ENCODE measurements at regions of chr1 and their contacts with region 1.

Region 1: DNA sequence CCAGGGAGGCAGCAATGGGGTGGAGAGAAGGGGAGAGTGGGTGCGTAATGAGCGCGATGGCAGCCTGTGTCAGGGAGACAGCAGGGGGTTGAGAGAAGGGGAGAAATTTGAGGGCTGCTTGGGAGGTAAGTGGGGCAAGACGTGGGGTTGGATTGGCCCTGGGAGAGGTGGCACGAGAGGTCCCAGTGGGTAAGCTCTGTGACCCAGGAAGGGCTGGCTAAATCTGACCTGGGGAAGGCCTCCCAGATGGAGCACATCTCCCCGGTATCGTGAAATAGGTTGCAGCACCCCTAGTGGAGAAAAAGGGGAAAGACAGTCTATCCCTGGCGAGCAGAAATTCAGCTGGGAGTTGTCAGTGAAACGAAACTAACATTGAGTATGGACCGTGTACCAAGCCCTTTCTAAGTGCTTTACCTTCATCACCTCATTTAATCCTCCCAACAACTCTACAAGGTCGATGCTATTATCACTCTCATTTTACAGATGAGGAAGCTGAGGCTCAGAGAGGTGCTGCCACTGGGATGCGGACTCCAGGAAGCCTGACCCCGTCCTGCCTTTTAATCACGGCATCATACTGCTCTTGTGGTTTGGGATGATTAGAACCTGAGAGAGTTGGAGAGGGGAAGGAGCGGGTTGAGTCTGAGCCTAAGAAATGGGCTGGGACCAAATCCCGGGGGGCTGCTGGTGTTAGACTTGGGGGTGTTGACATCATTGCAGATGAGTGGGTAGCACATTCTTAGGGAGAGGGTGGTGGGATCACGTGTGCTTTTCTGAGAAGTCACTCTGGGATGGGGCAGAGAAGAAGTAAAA is 56.6 kb upstream of the RPL11 start:
- DNase-seq: peak; percentile 62
- H3K4me3 ChIP-seq: peak overlapping the region; percentile 5 to 19 (median 13)
- H3K27ac ChIP-seq: no peak overlapping the region
- H3K4me1 ChIP-seq: no peaks in the 10 kb centered on the region
- H3K27me3 ChIP-seq: no peaks in the 10 kb centered on the region
- CTCF ChIP-seq: peak; percentile 87 to 95

Region 2: DNA sequence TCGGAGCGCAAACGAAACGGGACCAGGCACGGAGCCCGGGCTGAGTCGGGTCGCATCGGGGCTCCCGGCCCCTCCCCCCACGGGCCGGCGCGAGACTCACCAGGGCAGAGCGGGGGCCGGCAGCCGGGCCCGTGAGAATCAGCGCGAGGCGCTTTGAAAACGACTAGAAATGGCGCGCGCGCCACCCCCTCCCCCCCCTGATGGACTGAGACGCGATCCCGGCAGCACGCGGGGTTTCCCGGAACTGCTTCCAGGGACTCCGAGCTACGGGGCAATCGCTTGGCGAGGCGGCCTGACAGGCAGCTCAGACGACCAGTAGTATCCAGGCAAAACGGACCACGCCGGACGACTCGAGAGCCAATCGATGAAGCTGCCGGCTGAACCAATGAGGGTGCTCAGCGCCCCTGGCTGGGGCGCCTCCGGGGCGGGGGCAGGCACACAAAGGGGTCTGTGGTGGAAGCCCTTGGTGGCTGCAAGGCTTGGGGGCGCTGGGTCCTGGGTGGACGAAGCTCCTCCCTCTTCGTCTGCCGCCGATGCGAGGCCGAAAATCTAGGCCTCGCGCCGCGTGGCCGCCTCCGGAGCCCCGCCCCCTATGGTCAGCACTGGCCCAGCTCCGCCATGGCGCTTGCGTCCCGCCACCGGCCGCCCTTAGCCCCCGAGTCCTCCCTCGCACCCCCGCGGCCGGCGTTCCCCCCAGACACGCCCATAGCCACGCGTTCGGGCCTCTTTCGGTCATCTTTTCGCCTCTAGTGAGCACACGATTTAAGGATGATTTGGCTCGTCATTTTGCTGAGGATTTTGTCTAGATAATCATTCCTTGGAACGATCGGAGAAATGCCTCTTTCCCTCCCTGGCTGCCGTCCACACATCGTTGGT is 290.7 kb before region 1 on chr1 and contains the start of gene HNRNPR:
- CTCF ChIA-PET with region 1: no interaction called
- dilution Hi-C with region 1: no loop called
- in situ Hi-C with region 1: no loop called
- intact Hi-C with region 1: loop called (anchors 10 kb)
- DNase-seq: peak; percentile 100
- H3K4me3 ChIP-seq: peak within 1 kb of the TSS; percentile 78 to 89 (median 83)
- H3K27ac ChIP-seq: peak within 1 kb of the TSS; percentile 88
- H3K4me1 ChIP-seq: peaks cover 15% of the 10 kb centered on the region
- H3K27me3 ChIP-seq: no peaks in the 10 kb centered on the region
- CTCF ChIP-seq: peak in 1 of 2 donors; percentile 13
- total RNA-seq, gene HNRNPR: 35.2 to 133 TPM

Region 3: GRCh38 chr1:23496490-23497181 is 138.4 kb before region 1 on chr1:
- CTCF ChIA-PET with region 1: interaction called, 11 read pairs
- dilution Hi-C with region 1: no loop called
- in situ Hi-C with region 1: no loop called
- intact Hi-C with region 1: loop called (anchors 1 kb)
- DNase-seq: no peak
- H3K4me3 ChIP-seq: no peak overlapping the region
- H3K27ac ChIP-seq: no peak overlapping the region
- H3K4me1 ChIP-seq: no peaks in the 10 kb centered on the region
- H3K27me3 ChIP-seq: no peaks in the 10 kb centered on the region
- CTCF ChIP-seq: no peak

Region 4: GRCh38 chr1:23577056-23578004 is 57.7 kb before region 1 on chr1:
- CTCF ChIA-PET with region 1: interaction called, 12 read pairs
- dilution Hi-C with region 1: no loop called
- in situ Hi-C with region 1: no loop called
- intact Hi-C with region 1: no loop called
- DNase-seq: peak; percentile 69
- H3K4me3 ChIP-seq: no peak overlapping the region
- H3K27ac ChIP-seq: peak overlapping the region; percentile 60
- H3K4me1 ChIP-seq: peaks cover 18% of the 10 kb centered on the region
- H3K27me3 ChIP-seq: no peaks in the 10 kb centered on the region
- CTCF ChIP-seq: no peak

Region 5: DNA sequence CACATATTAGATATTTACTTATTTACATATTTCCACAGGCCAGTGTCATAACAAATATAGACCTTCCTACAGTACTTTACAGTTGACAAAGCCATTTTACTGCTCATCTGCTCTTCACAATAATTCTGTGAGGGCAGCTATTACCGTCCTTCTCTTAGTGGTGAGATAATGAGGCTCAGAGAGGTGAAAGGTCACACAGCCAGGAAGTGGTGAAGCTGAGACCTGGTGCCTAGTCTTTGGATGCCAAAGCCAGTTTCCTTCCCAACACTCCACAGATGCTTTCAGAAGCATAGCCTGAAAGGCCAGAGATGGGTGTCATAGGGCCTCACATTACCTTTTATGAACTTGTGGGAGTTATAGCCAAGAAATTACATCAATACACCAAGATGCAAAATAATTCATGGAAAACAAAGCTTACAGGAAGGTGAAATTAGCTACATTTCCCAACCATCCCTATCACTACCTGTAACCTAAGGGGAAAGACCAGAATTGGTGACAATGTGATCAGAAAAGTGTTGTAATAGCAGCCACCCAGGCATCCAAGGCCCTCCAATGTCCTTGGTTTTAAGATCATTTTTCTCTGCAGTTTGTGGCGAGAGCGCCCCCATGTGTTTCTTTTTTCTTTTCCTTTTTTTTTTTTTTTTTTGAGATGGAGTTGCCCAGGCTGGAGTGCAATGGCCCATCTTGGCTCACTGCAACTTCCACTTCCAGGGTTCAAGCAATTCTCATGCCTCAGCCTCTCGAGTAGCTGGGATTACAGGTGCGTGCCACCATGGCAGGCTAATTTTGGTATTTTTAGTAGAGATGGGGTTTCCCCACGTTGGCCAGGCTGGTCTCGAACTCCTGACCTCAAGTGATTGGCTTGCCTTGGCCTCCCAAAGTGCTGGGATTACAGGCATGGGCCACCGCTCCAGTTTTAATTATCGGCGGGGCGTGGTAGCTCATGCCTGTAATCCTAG is 30.1 kb after region 1 on chr1:
- CTCF ChIA-PET with region 1: no interaction called
- dilution Hi-C with region 1: no loop called
- in situ Hi-C with region 1: no loop called
- intact Hi-C with region 1: loop called (anchors 1 kb)
- DNase-seq: peak; percentile 29
- H3K4me3 ChIP-seq: no peak overlapping the region
- H3K27ac ChIP-seq: no peak overlapping the region
- H3K4me1 ChIP-seq: peaks cover 18% of the 10 kb centered on the region
- H3K27me3 ChIP-seq: no peaks in the 10 kb centered on the region
- CTCF ChIP-seq: peak; percentile 26 to 52

Region 6: DNA sequence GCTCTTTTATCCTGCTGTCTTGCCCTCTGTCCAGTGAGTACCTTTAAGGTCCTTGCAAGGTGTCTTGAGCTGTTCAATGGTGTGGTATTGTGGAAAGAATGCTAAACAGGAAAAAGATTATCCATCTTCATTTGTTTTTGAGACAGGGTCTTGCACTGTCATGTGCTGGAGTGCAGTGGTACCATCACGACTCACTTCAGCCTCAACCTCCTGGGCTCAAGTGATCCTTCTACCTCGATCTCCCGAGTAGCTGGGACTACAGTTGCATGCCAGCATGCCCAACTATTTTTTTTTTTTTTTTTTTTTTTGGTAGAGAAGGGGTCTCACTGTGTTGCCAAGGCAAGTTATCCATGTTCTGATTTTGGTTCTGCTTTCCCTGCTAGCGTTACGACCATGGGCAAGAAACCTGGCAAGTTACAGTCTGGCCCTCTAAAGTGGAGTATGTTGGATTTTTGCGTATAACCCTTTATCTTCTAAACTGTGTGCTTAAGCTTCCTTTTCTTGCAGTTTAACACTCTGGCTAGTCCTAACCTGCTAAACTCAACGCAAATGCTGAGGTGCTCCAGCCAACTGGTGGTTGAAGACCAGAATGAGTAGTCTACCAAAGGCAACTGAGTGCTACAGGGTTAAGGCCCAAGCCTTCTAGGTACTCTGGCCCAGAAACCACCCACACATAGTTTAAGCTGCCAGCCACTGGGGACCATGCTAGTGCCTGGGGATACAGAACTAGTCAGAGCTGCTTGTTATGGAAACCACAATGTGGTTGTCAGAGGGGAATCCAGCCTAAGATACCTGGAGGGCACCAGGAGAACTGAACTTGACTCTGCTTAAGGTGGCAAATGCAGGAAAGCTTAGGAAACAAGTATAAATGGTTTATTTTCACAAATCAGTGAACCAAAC is 64.5 kb after region 1 on chr1:
- CTCF ChIA-PET with region 1: no interaction called
- dilution Hi-C with region 1: no loop called
- in situ Hi-C with region 1: no loop called
- intact Hi-C with region 1: no loop called
- DNase-seq: peak; percentile 74
- H3K4me3 ChIP-seq: no peak overlapping the region
- H3K27ac ChIP-seq: no peak overlapping the region
- H3K4me1 ChIP-seq: peaks cover 34% of the 10 kb centered on the region
- H3K27me3 ChIP-seq: no peaks in the 10 kb centered on the region
- CTCF ChIP-seq: no peak

Region 7: DNA sequence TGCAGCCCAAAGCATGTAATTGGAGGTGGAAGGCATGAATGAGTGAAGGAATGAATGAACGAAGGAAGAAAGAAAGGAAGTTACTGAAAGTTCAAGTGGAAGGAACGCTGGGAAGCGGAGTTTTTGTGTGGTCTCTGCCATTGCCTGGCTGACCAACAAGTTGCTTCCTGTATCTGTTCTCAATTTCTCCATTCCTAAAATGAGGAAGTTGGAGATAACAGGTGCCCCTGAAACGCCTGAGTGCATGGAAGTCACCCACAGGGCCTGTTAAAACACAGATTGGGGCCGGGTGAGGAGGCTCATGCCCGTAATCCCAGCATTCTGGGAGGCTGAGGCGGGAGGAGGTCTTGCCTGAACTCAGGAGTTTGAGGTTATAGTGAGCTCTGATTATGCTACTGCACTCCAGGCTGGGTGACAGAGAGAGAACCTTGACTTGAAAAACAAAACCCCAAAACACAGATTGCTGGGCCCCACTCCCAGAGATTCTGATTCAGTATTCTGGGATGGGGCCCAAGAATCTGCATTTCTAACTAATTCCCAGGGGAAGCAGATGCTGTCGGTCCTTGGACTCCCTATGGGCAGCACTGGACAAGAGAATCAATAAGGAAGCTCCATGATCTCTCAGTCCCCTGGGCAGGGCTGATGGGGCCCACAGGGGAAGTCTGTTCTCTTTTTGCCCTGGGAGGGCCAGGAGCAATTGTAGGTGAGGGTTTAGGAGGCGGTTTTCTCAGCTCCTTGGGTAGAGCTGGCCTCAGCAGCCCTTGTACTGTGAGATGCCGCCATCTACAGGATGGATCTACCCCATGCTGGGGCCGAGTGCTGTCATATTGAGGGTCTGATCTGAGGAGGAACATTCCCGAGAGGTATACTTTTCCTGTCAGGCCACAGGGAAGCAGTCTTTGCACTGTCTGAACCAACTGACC is 281.4 kb after region 1 on chr1:
- CTCF ChIA-PET with region 1: no interaction called
- dilution Hi-C with region 1: no loop called
- in situ Hi-C with region 1: no loop called
- intact Hi-C with region 1: loop called (anchors 2 kb)
- DNase-seq: peak; percentile 70
- H3K4me3 ChIP-seq: no peak overlapping the region
- H3K27ac ChIP-seq: no peak overlapping the region
- H3K4me1 ChIP-seq: no peaks in the 10 kb centered on the region
- H3K27me3 ChIP-seq: no peaks in the 10 kb centered on the region
- CTCF ChIP-seq: peak; percentile 69 to 78

Measured in mammary epithelial cell (primary cell).